ENCODE measurements at regions of chr17 and their contacts with region 1.

Region 1: GRCh38 chr17:45385331-45385997 is 47.2 kb downstream of the ARHGAP27 start:
- DNase-seq: peak; percentile 90
- H3K4me3 ChIP-seq: no peak overlapping the region
- H3K27ac ChIP-seq: no peak overlapping the region
- H3K4me1 ChIP-seq: 0 out of 2 replicates have a peak, but pooled peaks cover 11% of the 10 kb centered on the region
- H3K27me3 ChIP-seq: no peaks in the 10 kb centered on the region

Region 2: DNA sequence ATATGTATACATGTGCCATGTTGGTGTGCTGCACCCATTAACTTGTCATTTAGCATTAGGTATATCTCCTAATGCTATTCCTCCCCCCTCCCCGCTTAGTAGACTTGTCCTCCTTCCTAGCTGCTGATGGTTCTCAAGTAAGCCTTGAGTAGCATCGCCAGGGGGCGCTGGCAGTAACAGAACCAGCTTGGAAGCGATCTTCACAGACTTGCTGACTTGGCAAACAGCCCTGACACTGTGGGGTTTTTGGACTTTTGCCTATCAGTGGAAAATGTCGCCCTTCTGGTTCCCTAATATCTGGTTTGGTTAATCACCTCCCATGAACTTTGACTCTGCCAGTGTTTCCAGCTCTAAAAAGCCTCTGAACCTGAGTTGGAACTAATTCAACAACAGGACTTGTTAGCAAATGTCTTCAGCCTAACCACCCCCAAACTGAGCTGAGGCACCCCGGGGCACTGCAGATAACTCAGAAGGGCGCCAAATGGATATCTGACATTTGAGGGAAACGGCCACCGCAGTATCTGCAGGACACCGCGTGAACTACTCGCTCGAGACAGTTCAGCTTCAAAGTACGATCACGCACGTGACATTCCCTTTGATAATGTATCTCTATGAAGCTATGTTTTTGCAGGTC is 108.1 kb before region 1 on chr17:
- in situ Hi-C with region 1: loop called (anchors 10 kb)
- DNase-seq: peak; percentile 92
- H3K4me3 ChIP-seq: no peak overlapping the region
- H3K27ac ChIP-seq: no peak overlapping the region
- H3K4me1 ChIP-seq: peaks cover 3% of the 10 kb centered on the region; the same call in 1 of the 2 replicates
- H3K27me3 ChIP-seq: no peaks in the 10 kb centered on the region

Region 3: DNA sequence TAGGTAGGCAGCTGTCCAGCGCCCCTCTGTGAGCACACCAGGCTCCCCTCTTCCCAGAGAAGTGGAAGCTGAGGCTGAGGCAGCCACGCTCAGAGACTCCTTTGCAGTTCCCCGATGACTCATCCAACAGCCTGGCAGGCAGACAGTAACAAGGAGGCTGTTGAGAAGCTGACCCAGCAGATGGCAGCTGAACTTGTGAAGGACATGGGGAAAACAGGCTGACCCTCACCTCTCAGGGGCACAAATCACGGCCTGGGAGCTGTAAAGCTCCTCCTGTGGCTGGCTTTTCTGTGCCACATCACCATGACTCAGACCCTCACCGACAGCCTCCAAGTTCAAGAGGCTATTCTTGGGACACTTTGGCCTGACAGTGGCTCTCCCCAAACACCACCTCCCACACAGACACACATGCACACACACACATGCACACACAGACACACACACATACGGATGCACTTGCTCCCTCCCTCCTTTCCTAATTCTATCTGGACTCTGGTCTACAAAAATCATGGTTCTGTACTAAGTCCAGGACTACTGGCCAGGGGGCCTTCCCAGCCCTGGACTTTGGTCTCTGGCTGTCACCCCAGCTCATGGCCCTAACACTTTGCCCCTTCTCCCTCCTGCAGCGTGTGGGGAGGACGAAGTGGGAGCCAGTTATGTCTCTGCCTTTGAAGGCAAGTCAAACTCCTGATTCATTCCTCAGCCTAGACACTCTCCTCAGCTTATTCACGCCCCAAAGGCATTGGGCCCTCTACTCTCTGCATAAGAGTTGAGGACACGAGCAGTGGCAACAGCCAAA is 91.9 kb before region 1 on chr17:
- in situ Hi-C with region 1: no loop called
- DNase-seq: peak; percentile 96
- H3K4me3 ChIP-seq: no peak overlapping the region
- H3K27ac ChIP-seq: peak overlapping the region; percentile 64
- H3K4me1 ChIP-seq: peaks cover 68% of the 10 kb centered on the region
- H3K27me3 ChIP-seq: no peaks in the 10 kb centered on the region